GM12878 (cell line): ENCODE measurements at regions of chr12 and their contacts with region 1.

Region 1: GRCh38 chr12:55610598-55610997 is 26.1 kb upstream of the OR10P1 start:
- DNase-seq: no peak
- ATAC-seq: no peak; the same call in 2 of the 3 replicates
- H3K4me3 ChIP-seq: no peak overlapping the region
- H3K27ac ChIP-seq: no peak overlapping the region
- H3K4me1 ChIP-seq: no peaks in the 10 kb centered on the region
- H3K27me3 ChIP-seq: peaks cover 0 to 2% of the 10 kb centered on the region in 2 experiments; a peak in 1 of 4 replicates
- CTCF ChIP-seq: no peak
- EP300 ChIP-seq: no peak
- POLR2A ChIP-seq: no peak
- RAD21 ChIP-seq: no peak

Region 2: DNA sequence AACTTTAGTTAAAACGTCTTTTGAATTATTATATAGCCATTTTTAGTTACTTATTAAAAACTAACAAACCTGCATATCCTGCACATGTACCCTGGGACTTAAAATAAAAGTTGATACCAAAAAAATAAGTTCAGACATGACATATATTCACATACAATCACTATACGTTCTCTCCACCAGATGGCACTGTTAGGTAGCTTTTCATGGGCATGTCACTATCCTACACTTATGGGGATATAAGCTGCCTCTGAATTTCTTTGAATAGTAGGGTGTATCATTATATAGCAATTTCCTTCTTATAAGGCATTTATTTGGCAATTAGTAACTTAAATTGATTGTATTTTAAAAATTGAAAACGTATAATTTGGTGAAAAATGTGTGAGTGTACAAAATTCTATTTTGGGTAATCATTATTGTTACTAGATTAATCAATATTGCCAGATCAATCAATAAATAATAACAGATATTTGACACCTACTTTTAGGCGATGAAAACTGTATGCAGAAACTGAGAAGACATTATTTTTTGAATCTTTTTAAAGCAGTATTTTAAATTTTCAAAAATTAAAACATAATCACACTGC is 421.5 kb before region 1 on chr12:
- CTCF ChIA-PET with region 1: interaction called, 13 read pairs
- POLR2A ChIA-PET with region 1: no interaction called
- RAD21 ChIA-PET with region 1: interaction called, 3 read pairs
- SMC1A ChIA-PET with region 1: interaction called, 3 read pairs
- in situ Hi-C with region 1: no loop called
- intact Hi-C with region 1: no loop called
- DNase-seq: peak; percentile 53
- ATAC-seq: peak; percentile 92
- H3K4me3 ChIP-seq: no peak overlapping the region
- H3K27ac ChIP-seq: no peak overlapping the region
- H3K4me1 ChIP-seq: no peaks in the 10 kb centered on the region
- H3K27me3 ChIP-seq: no peaks in the 10 kb centered on the region
- CTCF ChIP-seq: peak; percentile 50 to 68 (median 53); a peak in 5 of 6 replicates
- EP300 ChIP-seq: no peak
- POLR2A ChIP-seq: no peak
- RAD21 ChIP-seq: peak; percentile 88

Region 3: GRCh38 chr12:55196188-55196587 is 414.4 kb before region 1 on chr12:
- CTCF ChIA-PET with region 1: no interaction called
- POLR2A ChIA-PET with region 1: no interaction called
- RAD21 ChIA-PET with region 1: no interaction called
- SMC1A ChIA-PET with region 1: interaction called, 3 read pairs
- in situ Hi-C with region 1: loop called (anchors 5 kb)
- intact Hi-C with region 1: no loop called
- DNase-seq: no peak
- ATAC-seq: no peak
- H3K4me3 ChIP-seq: no peak overlapping the region
- H3K27ac ChIP-seq: no peak overlapping the region
- H3K4me1 ChIP-seq: no peaks in the 10 kb centered on the region
- H3K27me3 ChIP-seq: no peaks in the 10 kb centered on the region
- CTCF ChIP-seq: no peak
- EP300 ChIP-seq: no peak
- POLR2A ChIP-seq: no peak
- RAD21 ChIP-seq: no peak

Region 4: DNA sequence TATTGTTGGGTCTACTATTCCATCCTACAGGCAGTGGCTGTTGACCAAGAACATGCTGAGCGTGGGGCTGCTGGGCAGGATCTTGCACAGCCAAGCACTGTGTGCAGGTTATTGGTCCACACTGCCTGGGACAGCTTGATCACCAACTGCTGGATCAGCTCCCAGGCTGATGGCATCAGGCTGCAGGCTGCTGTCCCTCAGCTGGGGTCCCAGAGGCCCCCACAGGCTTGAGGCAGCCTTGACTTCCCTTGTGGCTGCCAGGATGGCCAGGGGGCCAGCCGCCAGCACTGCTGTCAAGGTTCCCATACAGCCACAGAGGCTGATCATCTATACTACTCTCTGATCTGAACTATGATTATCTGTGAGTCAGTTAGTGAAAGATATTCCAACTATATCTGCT is 28.5 kb before region 1 on chr12:
- CTCF ChIA-PET with region 1: no interaction called
- POLR2A ChIA-PET with region 1: no interaction called
- RAD21 ChIA-PET with region 1: no interaction called
- SMC1A ChIA-PET with region 1: no interaction called
- in situ Hi-C with region 1: no loop called
- intact Hi-C with region 1: no loop called
- DNase-seq: no peak
- ATAC-seq: no peak
- H3K4me3 ChIP-seq: no peak overlapping the region
- H3K27ac ChIP-seq: no peak overlapping the region
- H3K4me1 ChIP-seq: no peaks in the 10 kb centered on the region
- H3K27me3 ChIP-seq: no peaks in the 10 kb centered on the region
- CTCF ChIP-seq: no peak
- EP300 ChIP-seq: no peak
- POLR2A ChIP-seq: no peak
- RAD21 ChIP-seq: no peak